AG04450 (cell line): ENCODE measurements at regions of chr3 and their contacts with region 1.

Region 1: GRCh38 chr3:58824285-58824684 is 157.7 kb upstream of the FAM3D start:
- DNase-seq: peak; percentile 33
- H3K4me3 ChIP-seq: no peak overlapping the region
- H3K27ac ChIP-seq: no peak overlapping the region
- H3K27me3 ChIP-seq: no peaks in the 10 kb centered on the region
- CTCF ChIP-seq: peak; percentile 88

Region 2: DNA sequence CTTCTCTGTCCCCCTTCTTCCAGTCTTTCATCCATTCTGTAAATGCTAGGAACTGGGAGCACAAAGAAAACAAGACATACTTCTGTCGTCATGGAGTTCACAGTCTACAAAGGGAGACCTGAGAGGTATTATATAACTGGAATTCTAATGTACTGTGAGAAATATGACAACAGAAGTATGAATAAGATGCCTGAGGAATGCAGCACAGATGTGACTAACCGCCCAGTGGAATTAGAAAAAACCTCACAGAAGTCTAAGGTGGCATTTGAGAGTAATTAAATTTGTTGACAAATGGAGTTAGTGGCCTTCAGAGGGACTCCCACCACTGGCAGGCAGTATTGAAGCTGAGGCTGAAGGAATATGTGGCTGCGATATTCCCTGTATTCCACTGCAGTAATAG is 10.8 kb after region 1 on chr3:
- CTCF ChIA-PET with region 1: interaction called, 23 read pairs
- POLR2A ChIA-PET with region 1: no interaction called
- DNase-seq: no peak
- H3K4me3 ChIP-seq: no peak overlapping the region
- H3K27ac ChIP-seq: no peak overlapping the region
- H3K27me3 ChIP-seq: no peaks in the 10 kb centered on the region
- CTCF ChIP-seq: no peak

Region 3: DNA sequence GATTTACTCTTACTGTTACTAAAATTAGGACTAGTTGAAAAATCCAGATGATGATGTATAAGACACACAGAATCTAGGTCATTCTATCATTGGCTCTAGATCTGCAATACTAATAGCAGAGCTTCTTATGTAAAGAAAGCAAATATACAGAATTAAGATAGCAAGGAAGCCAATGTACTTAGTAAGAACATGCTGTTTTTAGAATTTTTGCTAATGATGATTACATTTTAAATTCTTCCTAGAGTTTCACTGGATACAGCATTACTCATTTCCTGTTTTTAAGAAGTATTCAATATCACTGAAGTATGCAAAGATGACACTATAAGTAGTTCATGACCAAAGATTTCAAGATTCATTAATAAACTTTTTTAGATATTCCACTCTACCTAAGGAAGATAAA is 164.9 kb after region 1 on chr3:
- CTCF ChIA-PET with region 1: interaction called, 14 read pairs
- POLR2A ChIA-PET with region 1: no interaction called
- DNase-seq: peak; percentile 34
- H3K4me3 ChIP-seq: no peak overlapping the region
- H3K27ac ChIP-seq: no peak overlapping the region
- H3K27me3 ChIP-seq: no peaks in the 10 kb centered on the region
- CTCF ChIP-seq: no peak

Region 4: GRCh38 chr3:58994746-58995330 is 170.6 kb after region 1 on chr3:
- CTCF ChIA-PET with region 1: interaction called, 13 read pairs
- POLR2A ChIA-PET with region 1: no interaction called
- DNase-seq: peak; percentile 38
- H3K4me3 ChIP-seq: no peak overlapping the region
- H3K27ac ChIP-seq: no peak overlapping the region
- H3K27me3 ChIP-seq: no peaks in the 10 kb centered on the region
- CTCF ChIP-seq: peak; percentile 92